ENCODE measurements at regions of chr4 and their contacts with region 1.

Region 1: DNA sequence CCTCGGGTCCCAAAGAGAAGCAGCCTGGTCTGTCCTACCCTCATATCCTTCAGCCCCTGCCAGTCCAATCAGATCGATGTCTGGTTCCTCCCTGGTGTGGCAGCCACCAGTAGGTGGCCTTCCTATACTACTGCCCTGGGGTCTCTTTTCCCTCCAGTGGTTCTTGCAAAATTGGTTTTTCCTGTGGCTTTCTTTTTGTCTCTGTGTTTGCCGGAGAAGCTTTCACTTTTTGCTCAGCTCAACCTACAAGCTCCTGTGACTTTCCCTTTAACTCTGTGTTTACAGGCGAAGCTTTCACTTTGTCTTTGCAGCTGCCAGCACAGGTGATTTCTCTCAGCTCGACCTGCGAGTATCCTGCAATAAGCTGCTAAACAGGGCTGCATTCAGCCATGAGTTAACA is 46.8 kb downstream of the UGT2A3 start:
- DNase-seq: no peak
- H3K4me3 ChIP-seq: peak overlapping the region in 1 of 4 experiments; percentile 48; a peak in 1 of 8 replicates
- H3K27ac ChIP-seq: peak overlapping the region; percentile 96
- H3K4me1 ChIP-seq: peaks cover 16 to 23% (median 20%) of the 10 kb centered on the region in 4 experiments
- H3K27me3 ChIP-seq: no peaks in the 10 kb centered on the region
- CTCF ChIP-seq: peak; percentile 43 to 51 (median 47)
- EP300 ChIP-seq: no peak
- POLR2A ChIP-seq: no peak
- RAD21 ChIP-seq: peak; percentile 48 to 66

Region 2: GRCh38 chr4:68498413-68499007 is 406.3 kb before region 1 on chr4:
- CTCF ChIA-PET with region 1: interaction called, 16 read pairs
- POLR2A ChIA-PET with region 1: no interaction called
- DNase-seq: peak; percentile 10 to 65
- H3K4me3 ChIP-seq: no peak overlapping the region
- H3K27ac ChIP-seq: no peak overlapping the region
- H3K4me1 ChIP-seq: peaks cover 0 to 4% (median 0%) of the 10 kb centered on the region in 4 experiments; a peak in 1 of 7 replicates
- H3K27me3 ChIP-seq: peaks cover 0 to 1% (median 0%) of the 10 kb centered on the region in 4 experiments; a peak in 1 of 7 replicates
- CTCF ChIP-seq: peak in 2 of 3 experiments; percentile 76 to 78; a peak in 3 of 4 replicates
- EP300 ChIP-seq: no peak
- POLR2A ChIP-seq: no peak
- RAD21 ChIP-seq: peak; percentile 97 to 99

Region 3: GRCh38 chr4:68850293-68850692 is 54.5 kb before region 1 on chr4:
- CTCF ChIA-PET with region 1: no interaction called
- POLR2A ChIA-PET with region 1: no interaction called
- DNase-seq: no peak
- H3K4me3 ChIP-seq: no peak overlapping the region
- H3K27ac ChIP-seq: no peak overlapping the region
- H3K4me1 ChIP-seq: no peaks in the 10 kb centered on the region
- H3K27me3 ChIP-seq: no peaks in the 10 kb centered on the region
- CTCF ChIP-seq: no peak
- EP300 ChIP-seq: no peak
- POLR2A ChIP-seq: no peak
- RAD21 ChIP-seq: no peak

Region 4: DNA sequence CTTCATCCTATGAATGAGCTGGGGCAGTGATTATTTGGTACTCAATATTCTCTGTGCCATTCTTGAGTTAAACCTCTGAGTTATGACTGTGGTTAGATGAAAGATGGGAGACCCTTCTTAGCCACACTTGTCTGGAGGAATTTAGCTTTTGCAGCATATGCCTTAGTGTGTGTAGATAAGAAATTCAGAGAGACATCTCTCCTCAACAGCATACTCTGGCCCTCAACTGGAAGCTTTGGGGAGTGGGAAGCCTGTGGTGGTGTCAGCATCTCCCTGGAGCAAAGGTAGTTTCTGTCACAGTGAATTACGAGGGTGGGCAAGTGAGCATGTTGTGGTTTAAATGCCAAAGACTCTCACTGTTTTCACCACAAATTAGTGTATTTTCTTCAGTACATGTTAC is 11.9 kb before region 1 on chr4:
- CTCF ChIA-PET with region 1: interaction called, 12 read pairs
- POLR2A ChIA-PET with region 1: interaction called, 4 read pairs
- DNase-seq: no peak
- H3K4me3 ChIP-seq: no peak overlapping the region
- H3K27ac ChIP-seq: no peak overlapping the region
- H3K4me1 ChIP-seq: no peaks in the 10 kb centered on the region
- H3K27me3 ChIP-seq: no peaks in the 10 kb centered on the region
- CTCF ChIP-seq: no peak
- EP300 ChIP-seq: no peak
- POLR2A ChIP-seq: no peak
- RAD21 ChIP-seq: no peak

Region 5: GRCh38 chr4:69025191-69025998 is 120.6 kb after region 1 on chr4:
- CTCF ChIA-PET with region 1: interaction called, 25 read pairs
- POLR2A ChIA-PET with region 1: interaction called, 3 read pairs
- DNase-seq: peak; percentile 29 to 47
- H3K4me3 ChIP-seq: no peak overlapping the region
- H3K27ac ChIP-seq: no peak overlapping the region
- H3K4me1 ChIP-seq: peaks cover 0 to 3% (median 1%) of the 10 kb centered on the region in 4 experiments; a peak in 2 of 7 replicates
- H3K27me3 ChIP-seq: no peaks in the 10 kb centered on the region
- CTCF ChIP-seq: peak; percentile 66 to 85 (median 70)
- EP300 ChIP-seq: no peak
- POLR2A ChIP-seq: no peak
- RAD21 ChIP-seq: peak; percentile 82 to 90

Measured in H1 (cell line).